ENCODE measurements at regions of chr15 and their contacts with region 1.

Region 1: GRCh38 chr15:95259513-95259912 is 1028.2 kb downstream of the MCTP2 start:
- DNase-seq: peak; percentile 43 to 81
- ATAC-seq: peak; percentile 93 to 98
- H3K4me3 ChIP-seq: no peak overlapping the region
- H3K27ac ChIP-seq: no peak overlapping the region
- H3K4me1 ChIP-seq: no peaks in the 10 kb centered on the region; the same call in 2 of the 3 replicates
- CTCF ChIP-seq: peak; percentile 91
- EP300 ChIP-seq: no peak
- POLR2A ChIP-seq: no peak
- RAD21 ChIP-seq: peak; percentile 95 to 96

Region 2: DNA sequence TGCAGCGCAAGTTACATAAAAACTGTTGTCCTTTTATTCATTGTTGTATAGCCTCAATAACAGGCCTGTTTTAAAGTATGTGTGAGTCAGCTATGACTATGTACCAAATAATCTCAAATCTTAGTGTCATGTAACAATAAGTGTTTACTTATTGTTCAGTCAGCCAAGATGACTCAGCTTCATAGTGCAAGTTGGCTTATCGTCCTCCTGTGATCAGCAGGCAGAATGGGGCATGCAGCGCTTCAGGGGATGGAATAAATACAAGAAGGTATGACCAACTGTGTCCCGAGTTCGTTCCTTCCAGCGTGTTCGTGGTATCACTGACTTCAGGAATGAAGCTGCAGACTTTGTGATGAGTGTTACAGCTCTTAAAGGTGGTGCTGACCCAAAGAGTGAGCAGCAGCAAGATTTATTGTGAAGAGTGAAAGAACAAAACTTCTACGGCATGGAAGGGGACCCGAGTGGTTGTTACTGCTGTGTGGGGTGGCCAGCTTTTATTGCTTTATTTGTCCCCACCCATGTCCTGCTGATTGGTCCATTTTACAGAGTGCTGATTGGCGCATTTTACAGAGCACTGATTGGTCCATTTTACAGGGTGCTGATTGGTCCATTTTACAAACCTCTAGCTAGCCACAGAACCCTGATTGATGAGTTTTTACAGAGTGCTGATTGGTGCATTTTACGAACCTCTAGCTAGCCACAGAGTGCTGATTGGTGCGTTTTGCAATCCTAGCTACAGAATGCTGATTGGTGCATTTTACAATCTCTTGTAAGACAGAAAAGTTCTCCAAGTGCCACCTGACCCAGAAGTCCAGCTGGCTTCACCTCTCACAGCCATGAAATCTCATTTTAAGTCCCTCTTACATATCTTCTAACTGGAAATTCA is 12.2 kb before region 1 on chr15:
- CTCF ChIA-PET with region 1: interaction called, 38 read pairs
- POLR2A ChIA-PET with region 1: no interaction called
- DNase-seq: peak; percentile 96
- ATAC-seq: peak; percentile 99 to 100
- H3K4me3 ChIP-seq: peak overlapping the region; percentile 25
- H3K27ac ChIP-seq: peak overlapping the region; percentile 67 to 84
- H3K4me1 ChIP-seq: peaks cover 16% of the 10 kb centered on the region
- CTCF ChIP-seq: no peak
- EP300 ChIP-seq: peak; percentile 69 to 73; a peak in 2 of 5 replicates
- POLR2A ChIP-seq: no peak
- RAD21 ChIP-seq: peak in 1 of 2 experiments; percentile 19; a peak in 2 of 5 replicates

Region 3: GRCh38 chr15:95284933-95285421 is 25.5 kb after region 1 on chr15:
- CTCF ChIA-PET with region 1: interaction called, 30 read pairs
- POLR2A ChIA-PET with region 1: no interaction called
- DNase-seq: no peak
- ATAC-seq: no peak
- H3K4me3 ChIP-seq: no peak overlapping the region
- H3K27ac ChIP-seq: no peak overlapping the region
- H3K4me1 ChIP-seq: no peaks in the 10 kb centered on the region
- CTCF ChIP-seq: no peak
- EP300 ChIP-seq: no peak
- POLR2A ChIP-seq: no peak
- RAD21 ChIP-seq: no peak

Region 4: GRCh38 chr15:95291898-95292472 is 32.5 kb after region 1 on chr15:
- CTCF ChIA-PET with region 1: interaction called, 19 read pairs
- POLR2A ChIA-PET with region 1: no interaction called
- DNase-seq: peak; percentile 42 to 63
- ATAC-seq: peak; percentile 52 to 90; a peak in 4 of 6 replicates
- H3K4me3 ChIP-seq: no peak overlapping the region
- H3K27ac ChIP-seq: no peak overlapping the region
- H3K4me1 ChIP-seq: no peaks in the 10 kb centered on the region
- CTCF ChIP-seq: peak; percentile 83
- EP300 ChIP-seq: no peak
- POLR2A ChIP-seq: no peak
- RAD21 ChIP-seq: peak; percentile 55 to 58

Region 5: GRCh38 chr15:96345560-96346399 is 1086.3 kb after region 1 on chr15:
- CTCF ChIA-PET with region 1: interaction called, 19 read pairs
- POLR2A ChIA-PET with region 1: interaction called, 4 read pairs
- DNase-seq: peak; percentile 80 to 94
- ATAC-seq: peak; percentile 79 to 89
- H3K4me3 ChIP-seq: peak overlapping the region; percentile 46
- H3K27ac ChIP-seq: peak overlapping the region; percentile 51 to 76
- H3K4me1 ChIP-seq: peaks cover 14% of the 10 kb centered on the region; the same call in 2 of the 3 replicates
- CTCF ChIP-seq: peak; percentile 87
- EP300 ChIP-seq: no peak
- POLR2A ChIP-seq: no peak
- RAD21 ChIP-seq: peak; percentile 94 to 96